Activated CD4-positive, alpha-beta T cell treated with anti-CD3 and anti-CD28 coated beads, Interleukin-2, amount 10 ng/mL, durations not matched to agents 24 days and 14 days (primary cell): ENCODE measurements at regions of chr1 and their contacts with region 1.

Region 1: GRCh38 chr1:161098210-161099068 is at the start of gene KLHDC9:
- DNase-seq: peak; percentile 92
- H3K4me3 Mint-ChIP-seq: peak within 1 kb of the TSS; percentile 80
- H3K27ac Mint-ChIP-seq: peak within 1 kb of the TSS; percentile 93
- H3K4me1 Mint-ChIP-seq: peaks cover 39% of the 10 kb centered on the region
- H3K27me3 Mint-ChIP-seq: peaks cover 2% of the 10 kb centered on the region
- total RNA-seq, gene KLHDC9: not detected in 2 replicates

Region 2: DNA sequence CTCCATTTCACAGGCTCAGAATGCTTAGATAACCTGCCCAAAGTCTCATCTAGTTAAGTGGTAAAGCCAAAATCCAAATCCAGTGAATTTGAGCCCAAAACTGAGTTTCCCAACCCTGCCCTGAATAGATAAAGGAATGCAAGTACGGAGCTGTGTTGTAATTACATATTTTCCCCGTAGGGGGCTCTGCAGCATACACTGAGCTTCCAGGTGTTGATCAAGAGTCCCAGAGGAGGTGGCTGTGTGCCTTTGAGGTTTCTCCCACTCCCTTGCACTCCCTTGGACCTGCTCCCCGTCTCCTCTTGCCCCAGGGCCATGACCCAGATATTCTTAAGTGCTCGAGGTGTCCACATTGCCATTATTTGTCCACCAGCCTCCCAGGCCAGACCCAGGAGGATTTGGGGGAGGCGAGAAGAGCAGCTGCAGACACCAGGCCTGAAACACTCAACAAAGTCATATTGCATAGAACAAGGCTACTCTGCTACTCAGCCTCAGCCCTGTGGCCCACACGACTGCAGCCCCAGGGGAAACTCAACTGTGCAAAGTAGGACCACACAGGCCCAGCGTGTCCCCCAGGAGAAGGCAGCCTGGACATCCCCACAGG is 320.9 kb before region 1 on chr1:
- intact Hi-C with region 1: no loop called
- DNase-seq: peak; percentile 87
- H3K4me3 Mint-ChIP-seq: no peak overlapping the region
- H3K27ac Mint-ChIP-seq: no peak overlapping the region
- H3K4me1 Mint-ChIP-seq: peaks cover 41% of the 10 kb centered on the region
- H3K27me3 Mint-ChIP-seq: no peaks in the 10 kb centered on the region

Region 3: GRCh38 chr1:160997323-160998038 is 101.0 kb before region 1 on chr1:
- intact Hi-C with region 1: loop called (anchors 2 kb)
- DNase-seq: peak; percentile 85
- H3K4me3 Mint-ChIP-seq: no peak overlapping the region
- H3K27ac Mint-ChIP-seq: peak overlapping the region; percentile 34
- H3K4me1 Mint-ChIP-seq: peaks cover 17% of the 10 kb centered on the region
- H3K27me3 Mint-ChIP-seq: no peaks in the 10 kb centered on the region

Region 4: DNA sequence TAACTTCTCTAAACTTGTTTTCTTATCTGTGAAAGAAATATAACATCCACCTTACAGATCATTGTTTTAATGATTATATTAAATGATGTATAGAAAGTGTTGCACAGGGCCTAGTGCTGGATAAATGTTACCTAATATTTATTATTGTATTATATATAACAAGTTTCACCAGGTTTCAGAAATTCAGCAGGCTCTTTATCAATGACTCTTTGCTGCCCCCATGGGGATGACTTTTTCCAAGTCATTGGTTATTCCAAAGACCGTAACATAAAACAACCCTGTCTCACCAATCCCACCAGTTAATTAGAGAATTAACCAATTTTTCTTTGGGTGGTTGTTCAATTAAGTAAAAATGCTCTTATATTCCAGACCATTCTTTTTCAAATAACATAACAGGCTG is 41.3 kb after region 1 on chr1:
- intact Hi-C with region 1: no loop called
- DNase-seq: peak; percentile 84
- H3K4me3 Mint-ChIP-seq: no peak overlapping the region
- H3K27ac Mint-ChIP-seq: no peak overlapping the region
- H3K4me1 Mint-ChIP-seq: peaks cover 9% of the 10 kb centered on the region
- H3K27me3 Mint-ChIP-seq: no peaks in the 10 kb centered on the region